GM23248 (cell line): ENCODE measurements at regions of chr6 and their contacts with region 1.

Region 1: DNA sequence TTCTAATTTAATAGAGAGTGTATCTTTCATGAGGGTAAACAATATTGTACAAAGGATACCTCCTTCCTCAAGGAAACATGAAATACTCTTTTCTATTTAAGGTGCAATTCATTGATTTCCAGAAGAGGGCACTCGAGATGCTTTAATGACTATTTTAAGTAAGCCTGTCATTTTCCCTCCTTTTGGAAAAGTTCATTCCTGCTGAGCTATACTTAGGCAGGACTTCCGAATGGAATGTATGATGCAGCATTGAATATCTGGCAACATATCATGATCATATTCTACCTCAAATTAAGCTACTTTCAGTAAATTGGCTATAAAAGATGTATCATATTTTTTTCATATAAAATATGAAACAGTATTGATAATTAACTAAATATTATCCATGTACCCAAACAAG is 5.0 kb downstream of the DST start:
- DNase-seq: peak; percentile 79
- H3K4me3 ChIP-seq: no peak overlapping the region
- H3K27ac ChIP-seq: no peak overlapping the region
- H3K4me1 ChIP-seq: peaks cover 22% of the 10 kb centered on the region
- H3K27me3 ChIP-seq: no peaks in the 10 kb centered on the region

Region 2: GRCh38 chr6:56699066-56699654 is 61.5 kb after region 1 on chr6:
- in situ Hi-C with region 1: loop called (anchors 5 kb)
- DNase-seq: peak; percentile 65
- H3K4me3 ChIP-seq: no peak overlapping the region
- H3K27ac ChIP-seq: no peak overlapping the region
- H3K4me1 ChIP-seq: peaks cover 29% of the 10 kb centered on the region
- H3K27me3 ChIP-seq: no peaks in the 10 kb centered on the region

Region 3: DNA sequence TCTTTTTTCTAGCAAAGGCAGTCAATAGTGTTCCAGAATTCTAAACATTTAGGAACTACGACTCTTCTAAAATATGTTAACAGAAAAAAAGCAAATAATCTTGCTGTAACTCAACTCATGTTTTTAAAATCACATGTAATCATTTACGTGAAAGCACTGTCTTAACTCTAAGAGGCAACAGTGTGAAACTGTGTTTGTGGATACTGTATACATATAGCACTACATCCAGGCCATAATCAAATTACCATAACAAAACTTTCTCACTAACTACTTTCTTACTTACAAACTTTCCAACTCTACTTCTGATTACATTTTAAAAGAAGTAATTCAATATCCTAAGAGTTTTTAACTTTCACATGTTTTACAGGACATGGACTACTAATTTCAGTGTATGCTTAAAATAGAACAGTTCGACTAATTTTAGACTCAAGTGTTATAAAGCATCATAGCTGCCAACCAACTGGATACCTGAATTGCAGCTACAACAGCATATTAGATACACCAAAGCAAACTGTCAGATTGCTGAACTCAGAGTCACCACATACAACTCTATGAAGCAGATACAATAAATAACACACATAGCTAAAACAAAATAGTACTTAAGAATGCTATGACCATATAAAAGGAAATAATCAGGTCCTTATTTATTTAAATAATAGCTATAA is 195.6 kb after region 1 on chr6:
- in situ Hi-C with region 1: loop called (anchors 10 kb)
- DNase-seq: no peak
- H3K4me3 ChIP-seq: no peak overlapping the region
- H3K27ac ChIP-seq: no peak overlapping the region
- H3K4me1 ChIP-seq: peaks cover 61% of the 10 kb centered on the region
- H3K27me3 ChIP-seq: no peaks in the 10 kb centered on the region

Region 4: DNA sequence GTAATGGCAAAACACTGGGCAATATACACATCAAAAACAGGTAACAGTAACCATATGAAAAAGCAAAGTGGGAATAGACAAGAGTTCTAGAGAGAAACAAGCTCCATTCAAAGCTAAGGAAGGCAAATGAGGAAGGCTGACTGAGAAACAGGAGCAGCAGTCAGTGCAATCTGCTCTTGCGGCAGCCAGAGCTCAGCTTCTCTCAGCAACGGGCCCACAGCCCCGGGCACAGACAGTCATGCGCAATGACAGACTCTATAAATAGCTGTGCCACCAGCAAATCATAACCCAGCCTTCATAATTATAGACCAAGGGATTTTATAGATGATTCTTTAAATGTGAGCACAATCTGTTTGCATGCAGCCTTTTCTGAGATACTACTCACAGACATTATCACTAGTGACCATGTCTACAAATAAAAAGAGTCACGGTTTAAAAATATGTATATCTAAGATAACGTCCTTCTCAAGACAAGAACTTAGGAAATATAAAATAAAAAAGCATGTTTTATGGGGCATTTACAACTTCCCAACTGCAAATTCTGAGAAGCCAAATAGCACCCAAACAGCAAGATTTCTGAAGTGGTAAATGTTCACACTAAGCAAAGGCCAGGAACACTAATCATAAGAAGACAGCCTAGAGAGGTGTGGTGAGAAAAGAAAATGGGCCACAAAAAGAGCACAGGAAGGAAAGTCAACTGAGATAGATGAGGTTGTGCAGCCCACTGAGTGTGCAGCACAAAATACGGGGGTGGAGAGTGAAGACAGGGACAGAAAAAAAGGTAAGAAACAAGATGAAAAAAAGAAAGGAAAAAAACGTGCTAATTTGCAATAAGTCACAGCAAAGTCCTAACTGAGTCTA is 277.4 kb after region 1 on chr6:
- in situ Hi-C with region 1: no loop called
- DNase-seq: peak; percentile 59
- H3K4me3 ChIP-seq: no peak overlapping the region
- H3K27ac ChIP-seq: 0 out of 2 replicates have a peak overlapping the region, but pooled peaks have one; percentile 15
- H3K4me1 ChIP-seq: peaks cover 38% of the 10 kb centered on the region
- H3K27me3 ChIP-seq: no peaks in the 10 kb centered on the region

Region 5: DNA sequence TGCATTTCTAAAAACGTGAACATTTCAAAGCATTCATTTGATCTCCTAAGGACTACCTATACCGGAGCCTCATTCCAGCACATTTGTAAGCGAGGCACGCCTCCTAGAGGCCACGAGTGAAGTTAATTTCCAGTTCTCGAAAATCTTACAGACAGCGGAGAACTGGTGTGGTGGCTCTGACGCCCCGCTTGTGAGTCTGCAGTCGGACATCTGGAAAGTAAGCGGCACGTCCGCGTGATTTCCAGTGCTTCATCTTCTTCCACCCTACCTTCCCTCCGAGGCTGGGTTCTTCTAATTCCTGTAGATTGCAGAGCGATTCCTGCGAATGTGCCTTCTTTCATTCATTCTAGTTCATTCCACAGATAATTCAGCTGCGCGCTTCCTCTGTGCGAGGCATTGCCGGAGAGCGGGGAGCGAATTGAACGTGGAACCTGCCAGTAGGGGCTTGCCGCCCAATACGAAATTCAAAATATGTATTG is 679.0 kb after region 1 on chr6:
- in situ Hi-C with region 1: loop called (anchors 25 kb)
- DNase-seq: peak; percentile 95
- H3K4me3 ChIP-seq: peak overlapping the region; percentile 89
- H3K27ac ChIP-seq: peak overlapping the region; percentile 66
- H3K4me1 ChIP-seq: peaks cover 62% of the 10 kb centered on the region
- H3K27me3 ChIP-seq: no peaks in the 10 kb centered on the region